Heart right ventricle (tissue), 16 donors: ENCODE measurements at regions of chr15 and their contacts with region 1.

Region 1: DNA sequence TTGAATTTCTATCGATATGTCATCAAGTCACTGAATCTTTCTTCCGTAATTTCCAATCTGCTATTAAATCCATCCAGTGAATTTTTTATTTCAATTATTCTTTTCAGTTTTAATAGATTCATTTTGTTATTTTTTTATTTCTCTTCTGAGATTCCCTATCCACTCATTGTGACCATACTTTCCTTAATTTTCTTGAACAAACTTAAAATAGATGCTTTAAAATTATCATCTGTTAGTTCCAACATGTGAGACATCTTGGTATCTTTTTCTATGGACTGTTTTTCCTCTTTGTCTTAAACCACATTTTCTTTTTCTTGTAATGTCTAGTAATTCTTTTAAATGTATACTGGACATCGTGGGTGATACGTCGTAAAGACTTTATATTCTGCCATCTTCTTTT is 236.6 kb upstream of the TLE3 start:
- DNase-seq: no peak
- ATAC-seq: no peak
- H3K4me3 ChIP-seq: no peak overlapping the region
- H3K27ac ChIP-seq: no peak overlapping the region
- H3K4me1 ChIP-seq: peaks cover 0 to 4% (median 0%) of the 10 kb centered on the region in 9 donors
- H3K27me3 ChIP-seq: peaks cover 0 to 7% (median 0%) of the 10 kb centered on the region in 7 donors
- CTCF ChIP-seq: no peak

Region 2: DNA sequence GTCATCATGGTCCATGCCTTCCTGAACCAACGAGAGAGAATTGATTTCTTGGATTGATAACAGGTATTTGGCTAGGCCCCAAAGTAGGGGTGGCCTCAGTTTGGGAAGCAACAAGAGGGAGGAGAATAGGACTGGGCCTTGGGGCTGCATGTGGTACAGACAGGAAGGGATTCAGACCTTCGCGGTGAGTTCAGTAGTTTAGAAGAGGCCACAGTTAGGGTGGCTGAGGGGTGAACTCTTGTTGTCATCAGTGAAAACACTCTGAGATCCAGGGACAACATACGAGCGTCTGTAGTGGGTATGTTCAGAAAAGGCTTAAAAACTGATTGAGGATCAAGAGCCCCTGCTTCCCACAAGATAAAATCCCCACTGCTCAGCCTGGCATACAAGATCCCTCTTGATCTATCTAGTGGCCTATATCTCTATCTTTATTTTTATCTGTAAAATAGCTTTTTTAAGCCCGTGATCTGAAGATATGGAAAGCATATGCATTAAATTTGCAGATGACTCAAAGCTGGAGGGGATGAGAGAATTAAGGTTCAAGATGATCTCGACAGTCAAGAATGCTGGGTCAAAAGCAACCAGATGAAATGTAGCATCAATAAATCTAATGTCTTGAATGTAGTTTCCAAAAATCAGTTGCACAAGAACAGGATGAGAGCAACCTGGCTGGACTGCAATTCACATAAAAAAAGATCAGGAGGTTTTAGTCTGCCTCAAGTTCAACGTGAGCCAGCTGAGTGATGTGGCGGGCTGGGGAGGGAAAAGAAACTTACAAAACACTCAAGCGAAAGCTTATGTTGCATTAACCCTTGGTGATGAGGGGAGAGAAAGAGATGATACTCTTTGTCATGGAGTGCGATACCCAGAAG is 15.5 kb before region 1 on chr15:
- intact Hi-C with region 1: loop called in 1 of 10 experiments (anchors 1 kb)
- DNase-seq: no peak
- ATAC-seq: no peak
- H3K4me3 ChIP-seq: no peak overlapping the region
- H3K27ac ChIP-seq: no peak overlapping the region
- H3K4me1 ChIP-seq: peaks cover 0 to 48% (median 25%) of the 10 kb centered on the region in 9 donors
- H3K27me3 ChIP-seq: peaks cover 0 to 20% (median 17%) of the 10 kb centered on the region in 7 donors
- CTCF ChIP-seq: no peak

Region 3: DNA sequence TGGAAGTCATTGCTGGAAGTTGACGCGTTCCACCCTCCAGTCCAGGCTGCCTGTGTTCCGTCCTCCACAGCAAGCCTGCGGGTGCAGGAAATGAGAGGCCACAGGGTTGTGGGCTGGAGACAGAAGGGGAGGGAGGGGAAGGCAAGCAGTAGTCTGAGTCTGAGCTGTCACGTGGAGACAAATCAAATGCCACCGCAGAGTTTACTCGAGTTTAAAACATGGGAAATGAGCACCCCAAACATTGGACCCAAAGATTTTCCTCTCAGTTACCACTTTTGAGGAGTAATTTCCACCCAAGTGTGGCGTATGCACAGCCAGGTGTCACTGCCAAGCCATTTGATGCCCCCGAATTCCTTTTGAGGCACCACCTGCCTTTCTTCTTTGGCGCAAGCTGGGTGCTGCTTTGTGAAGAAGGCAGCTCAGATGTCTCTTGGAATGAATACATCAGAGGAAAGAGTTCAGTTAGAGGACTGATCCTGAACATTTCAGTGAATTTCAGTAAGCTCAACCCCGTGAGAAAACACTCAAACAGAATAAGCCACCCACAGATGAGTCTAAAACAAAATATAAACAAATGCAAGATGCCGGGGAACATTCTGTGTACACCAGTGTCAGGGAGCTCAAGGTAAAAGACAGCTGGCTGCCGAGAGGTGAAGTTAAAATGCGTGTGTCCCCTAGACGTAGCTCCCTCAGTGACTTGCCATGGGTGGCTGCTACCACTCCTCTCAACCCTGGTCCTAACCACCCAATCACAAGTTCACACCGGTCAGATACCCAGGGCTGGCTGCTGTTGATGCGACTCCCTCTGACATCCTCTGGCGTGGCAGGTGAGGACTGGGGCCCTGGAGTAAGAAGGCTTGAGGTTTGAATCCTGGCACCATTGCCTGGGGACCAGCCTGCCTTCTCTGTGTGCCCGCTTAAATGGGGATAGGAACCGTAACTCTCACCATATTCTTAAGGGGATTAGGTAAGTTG is 225.3 kb after region 1 on chr15:
- intact Hi-C with region 1: no loop called
- DNase-seq: peak; percentile 31 to 36
- ATAC-seq: peak in 7 of 8 donors; percentile 58 to 86 (median 74)
- H3K4me3 ChIP-seq: peak overlapping the region in 1 of 10 donors; percentile 13
- H3K27ac ChIP-seq: no peak overlapping the region
- H3K4me1 ChIP-seq: peaks cover 0 to 13% (median 7%) of the 10 kb centered on the region in 9 donors
- H3K27me3 ChIP-seq: peaks cover 0 to 13% (median 0%) of the 10 kb centered on the region in 7 donors
- CTCF ChIP-seq: no peak

Region 4: DNA sequence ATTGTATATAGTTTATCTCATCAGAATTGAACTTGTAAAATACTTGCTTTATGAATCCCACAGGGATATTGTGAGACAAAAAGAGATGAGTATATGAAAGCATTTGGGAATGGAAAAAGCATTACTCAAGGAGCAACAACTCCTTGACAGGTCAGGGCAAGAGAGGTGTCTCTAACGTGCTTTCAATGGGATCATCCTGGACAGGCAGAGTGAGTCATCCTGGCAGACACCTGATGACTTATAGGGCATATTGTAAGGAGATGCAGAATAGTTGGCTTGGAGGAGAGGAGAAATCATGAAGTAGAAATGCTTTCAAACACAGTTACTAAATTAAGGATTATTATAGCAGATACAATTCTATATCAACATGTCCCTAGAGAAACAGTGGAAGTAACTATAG is 709.1 kb after region 1 on chr15:
- intact Hi-C with region 1: no loop called
- DNase-seq: no peak
- ATAC-seq: no peak
- H3K4me3 ChIP-seq: no peak overlapping the region
- H3K27ac ChIP-seq: no peak overlapping the region
- H3K4me1 ChIP-seq: peaks cover 0 to 8% (median 0%) of the 10 kb centered on the region in 9 donors
- H3K27me3 ChIP-seq: no peaks in the 10 kb centered on the region
- CTCF ChIP-seq: no peak